Aorta (tissue), 5 donors: ENCODE measurements at regions of chrX and their contacts with region 1.

Region 1: GRCh38 chrX:49291615-49292337 is 11.7 kb upstream of the GAGE10 start:
- DNase-seq: peak in 1 of 2 donors; percentile 67
- ATAC-seq: peak; percentile 73
- H3K4me3 ChIP-seq: no peak overlapping the region
- H3K27ac ChIP-seq: no peak overlapping the region
- H3K4me1 ChIP-seq: no peaks in the 10 kb centered on the region
- H3K27me3 ChIP-seq: no peaks in the 10 kb centered on the region

Region 2: DNA sequence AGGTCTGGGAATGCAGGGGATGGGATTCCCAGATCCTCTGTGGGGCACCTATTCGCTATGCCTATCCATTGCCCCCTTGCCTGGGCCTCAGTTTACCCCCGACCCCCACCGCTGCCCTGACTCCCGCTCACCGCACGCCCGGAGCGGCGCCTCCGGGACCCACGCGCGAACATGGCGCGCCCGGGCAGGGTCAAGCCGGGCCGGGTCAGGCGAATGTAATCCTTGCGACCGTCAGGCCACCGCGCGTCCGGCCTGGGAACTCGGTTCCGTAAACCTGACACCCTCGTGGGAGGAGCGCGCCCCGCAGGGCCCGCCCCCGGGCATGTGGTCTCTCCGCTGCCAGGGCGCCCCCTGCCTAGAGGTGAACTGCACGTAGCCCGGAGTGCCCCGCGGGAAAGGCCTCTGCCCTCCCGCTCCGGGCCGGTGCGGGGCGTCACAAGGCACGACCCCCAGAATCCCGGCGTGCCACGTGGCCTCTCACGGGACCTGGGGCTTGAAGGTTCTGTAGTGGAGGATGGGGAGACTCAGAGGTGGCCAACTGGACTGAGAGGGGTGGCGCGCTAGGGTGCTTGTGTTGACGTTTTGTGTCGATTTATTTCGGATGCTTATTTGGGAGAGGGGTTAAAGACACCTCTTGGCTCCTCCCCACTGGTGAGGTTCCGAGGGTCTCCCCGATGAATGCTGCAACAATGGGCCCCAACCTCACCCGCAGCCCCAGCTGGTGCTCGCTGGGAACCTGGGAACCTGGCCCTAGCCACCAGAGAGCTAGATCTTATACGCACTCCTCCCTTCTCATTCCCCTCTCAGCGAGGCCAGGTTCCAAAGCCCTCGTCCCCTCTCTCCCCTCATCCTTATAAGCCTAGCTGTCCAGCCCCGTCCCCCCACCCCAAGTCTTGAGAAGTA is 105.4 kb before region 1 on chrX and contains the start of gene PRICKLE3:
- intact Hi-C with region 1: no loop called
- DNase-seq: peak; percentile 90 to 93
- ATAC-seq: peak; percentile 70
- H3K4me3 ChIP-seq: peak within 1 kb of the TSS; percentile 27 to 85
- H3K27ac ChIP-seq: peak within 1 kb of the TSS in 1 of 2 donors; percentile 79
- H3K4me1 ChIP-seq: no peaks in the 10 kb centered on the region
- H3K27me3 ChIP-seq: no peaks in the 10 kb centered on the region
- total RNA-seq, gene PRICKLE3: 11.9 to 13.3 TPM

Region 3: DNA sequence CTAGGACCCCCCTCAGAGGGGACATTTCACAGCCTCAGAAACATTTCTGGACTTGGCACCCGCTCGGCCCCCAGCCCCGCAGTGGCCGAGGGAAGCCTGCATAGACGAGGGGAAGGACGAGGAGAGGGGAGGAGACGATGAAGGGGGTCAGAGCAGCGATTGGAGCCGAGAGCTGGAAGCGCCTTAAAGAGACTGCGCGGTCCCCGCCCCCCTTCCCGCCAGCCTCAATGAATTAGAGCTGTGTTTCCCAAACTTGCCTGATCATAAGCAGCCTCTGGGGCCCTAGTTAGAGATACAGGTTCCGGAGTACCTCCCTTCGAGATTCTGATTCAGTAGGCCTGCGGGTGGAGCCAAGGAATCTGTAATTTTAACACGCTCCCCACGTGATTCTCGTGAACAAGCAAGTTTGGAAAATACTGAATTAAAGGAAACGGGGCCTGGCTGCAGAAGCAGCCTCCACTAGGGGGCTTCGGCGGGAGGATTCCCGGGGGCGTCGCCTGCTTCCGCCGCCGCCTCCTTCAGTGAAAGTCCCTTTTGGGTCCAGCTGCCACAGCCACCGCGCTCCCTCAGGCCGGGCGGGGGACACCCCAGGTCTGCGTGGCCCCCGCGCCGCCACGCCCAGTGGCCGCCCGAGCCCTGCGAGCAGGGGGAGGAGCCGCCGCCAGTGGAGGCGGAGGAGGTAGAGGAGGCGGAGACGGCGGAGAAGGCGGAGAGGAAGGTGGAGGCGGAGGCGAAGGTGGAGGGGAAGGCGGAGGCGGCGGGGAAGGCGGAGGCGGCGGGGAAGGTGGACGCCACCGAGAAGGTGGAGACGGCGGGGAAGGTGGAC is 587.3 kb after region 1 on chrX and contains the start of gene USP27X:
- intact Hi-C with region 1: loop called in 1 of 2 experiments (anchors 5 kb)
- DNase-seq: peak; percentile 85 to 92
- ATAC-seq: peak; percentile 91
- H3K4me3 ChIP-seq: peak within 1 kb of the TSS; percentile 42 to 83
- H3K27ac ChIP-seq: peak within 1 kb of the TSS in 1 of 2 donors; percentile 69
- H3K4me1 ChIP-seq: peaks cover 0 to 2% of the 10 kb centered on the region in 2 donors
- H3K27me3 ChIP-seq: peaks cover 0 to 8% of the 10 kb centered on the region in 2 donors
- total RNA-seq, gene USP27X: 3.9 TPM